K562 (cell line): ENCODE measurements at regions of chr3 and their contacts with region 1.

Region 1: DNA sequence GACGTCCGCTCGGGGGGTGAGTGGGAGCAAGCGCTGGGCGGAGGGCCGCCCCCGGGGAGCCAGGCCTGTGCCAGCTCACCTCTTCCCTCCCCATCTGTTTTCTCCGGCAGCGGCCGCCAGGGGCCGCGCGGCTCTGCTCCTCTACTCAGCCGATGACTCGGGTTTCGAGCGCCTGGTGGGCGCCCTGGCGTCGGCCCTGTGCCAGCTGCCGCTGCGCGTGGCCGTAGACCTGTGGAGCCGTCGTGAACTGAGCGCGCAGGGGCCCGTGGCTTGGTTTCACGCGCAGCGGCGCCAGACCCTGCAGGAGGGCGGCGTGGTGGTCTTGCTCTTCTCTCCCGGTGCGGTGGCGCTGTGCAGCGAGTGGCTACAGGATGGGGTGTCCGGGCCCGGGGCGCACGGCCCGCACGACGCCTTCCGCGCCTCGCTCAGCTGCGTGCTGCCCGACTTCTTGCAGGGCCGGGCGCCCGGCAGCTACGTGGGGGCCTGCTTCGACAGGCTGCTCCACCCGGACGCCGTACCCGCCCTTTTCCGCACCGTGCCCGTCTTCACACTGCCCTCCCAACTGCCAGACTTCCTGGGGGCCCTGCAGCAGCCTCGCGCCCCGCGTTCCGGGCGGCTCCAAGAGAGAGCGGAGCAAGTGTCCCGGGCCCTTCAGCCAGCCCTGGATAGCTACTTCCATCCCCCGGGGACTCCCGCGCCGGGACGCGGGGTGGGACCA is 632 bp upstream of the CRELD1 start:
- DNase-seq: peak; percentile 84 to 91 (median 88)
- ATAC-seq: peak; percentile 87
- H3K4me3 ChIP-seq: peak overlapping the region; percentile 57
- H3K27ac ChIP-seq: peak overlapping the region; percentile 88
- H3K4me1 ChIP-seq: peaks cover 11 to 43% of the 10 kb centered on the region in 2 experiments; a peak in 4 of 5 replicates
- H3K27me3 ChIP-seq: no peaks in the 10 kb centered on the region
- CTCF ChIP-seq: peak; percentile 86 to 96 (median 90)
- EP300 ChIP-seq: no peak
- POLR2A ChIP-seq: no peak; the same call in 1 of the 2 replicates
- RAD21 ChIP-seq: peak; percentile 85 to 86

Region 2: GRCh38 chr3:9715764-9716437 is 217.1 kb before region 1 on chr3:
- CTCF ChIA-PET with region 1: no interaction called
- POLR2A ChIA-PET with region 1: no interaction called
- in situ Hi-C with region 1: no loop called
- intact Hi-C with region 1: loop called (anchors 5 kb)
- DNase-seq: peak; percentile 82 to 94 (median 87)
- ATAC-seq: peak; percentile 99
- H3K4me3 ChIP-seq: no peak overlapping the region
- H3K27ac ChIP-seq: peak overlapping the region; percentile 62; the same call in 2 of the 3 replicates
- H3K4me1 ChIP-seq: peaks cover 5 to 10% of the 10 kb centered on the region in 2 experiments; a peak in 4 of 5 replicates
- H3K27me3 ChIP-seq: peaks cover 33 to 38% of the 10 kb centered on the region in 2 experiments
- CTCF ChIP-seq: peak; percentile 93 to 99 (median 99)
- EP300 ChIP-seq: peak; percentile 79
- POLR2A ChIP-seq: no peak
- RAD21 ChIP-seq: peak; percentile 99

Region 3: GRCh38 chr3:9862391-9863057 is 70.5 kb before region 1 on chr3:
- CTCF ChIA-PET with region 1: no interaction called
- POLR2A ChIA-PET with region 1: no interaction called
- in situ Hi-C with region 1: no loop called
- intact Hi-C with region 1: loop called (anchors 5 kb)
- DNase-seq: peak; percentile 96 to 100 (median 99)
- ATAC-seq: peak; percentile 99
- H3K4me3 ChIP-seq: peak overlapping the region; percentile 36
- H3K27ac ChIP-seq: peak overlapping the region; percentile 56
- H3K4me1 ChIP-seq: peaks cover 6 to 30% of the 10 kb centered on the region in 2 experiments; a peak in 4 of 5 replicates
- H3K27me3 ChIP-seq: no peaks in the 10 kb centered on the region
- CTCF ChIP-seq: peak; percentile 68 to 98 (median 95)
- EP300 ChIP-seq: no peak
- POLR2A ChIP-seq: peak; percentile 77
- RAD21 ChIP-seq: peak; percentile 86 to 89

Region 4: GRCh38 chr3:9944271-9944670 is 11.3 kb after region 1 on chr3:
- CTCF ChIA-PET with region 1: no interaction called
- POLR2A ChIA-PET with region 1: interaction called, 11 read pairs
- in situ Hi-C with region 1: no loop called
- intact Hi-C with region 1: no loop called
- DNase-seq: no peak
- ATAC-seq: no peak
- H3K4me3 ChIP-seq: no peak overlapping the region
- H3K27ac ChIP-seq: no peak overlapping the region
- H3K4me1 ChIP-seq: peaks cover 0 to 27% of the 10 kb centered on the region in 2 experiments; a peak in 1 of 5 replicates
- H3K27me3 ChIP-seq: no peaks in the 10 kb centered on the region
- CTCF ChIP-seq: no peak
- EP300 ChIP-seq: no peak
- POLR2A ChIP-seq: no peak
- RAD21 ChIP-seq: no peak

Region 5: GRCh38 chr3:9986237-9986725 is 53.3 kb after region 1 on chr3:
- CTCF ChIA-PET with region 1: interaction called, 4 read pairs
- POLR2A ChIA-PET with region 1: interaction called, 15 read pairs
- in situ Hi-C with region 1: no loop called
- intact Hi-C with region 1: no loop called
- DNase-seq: no peak
- ATAC-seq: peak; percentile 52
- H3K4me3 ChIP-seq: peak overlapping the region; percentile 96
- H3K27ac ChIP-seq: peak overlapping the region; percentile 75
- H3K4me1 ChIP-seq: peaks cover 10 to 12% of the 10 kb centered on the region in 2 experiments; a peak in 4 of 5 replicates
- H3K27me3 ChIP-seq: no peaks in the 10 kb centered on the region
- CTCF ChIP-seq: 0 out of 6 replicates have a peak, but pooled peaks of 1 of the 3 experiments have one; percentile 0
- EP300 ChIP-seq: no peak
- POLR2A ChIP-seq: no peak
- RAD21 ChIP-seq: no peak

Region 6: DNA sequence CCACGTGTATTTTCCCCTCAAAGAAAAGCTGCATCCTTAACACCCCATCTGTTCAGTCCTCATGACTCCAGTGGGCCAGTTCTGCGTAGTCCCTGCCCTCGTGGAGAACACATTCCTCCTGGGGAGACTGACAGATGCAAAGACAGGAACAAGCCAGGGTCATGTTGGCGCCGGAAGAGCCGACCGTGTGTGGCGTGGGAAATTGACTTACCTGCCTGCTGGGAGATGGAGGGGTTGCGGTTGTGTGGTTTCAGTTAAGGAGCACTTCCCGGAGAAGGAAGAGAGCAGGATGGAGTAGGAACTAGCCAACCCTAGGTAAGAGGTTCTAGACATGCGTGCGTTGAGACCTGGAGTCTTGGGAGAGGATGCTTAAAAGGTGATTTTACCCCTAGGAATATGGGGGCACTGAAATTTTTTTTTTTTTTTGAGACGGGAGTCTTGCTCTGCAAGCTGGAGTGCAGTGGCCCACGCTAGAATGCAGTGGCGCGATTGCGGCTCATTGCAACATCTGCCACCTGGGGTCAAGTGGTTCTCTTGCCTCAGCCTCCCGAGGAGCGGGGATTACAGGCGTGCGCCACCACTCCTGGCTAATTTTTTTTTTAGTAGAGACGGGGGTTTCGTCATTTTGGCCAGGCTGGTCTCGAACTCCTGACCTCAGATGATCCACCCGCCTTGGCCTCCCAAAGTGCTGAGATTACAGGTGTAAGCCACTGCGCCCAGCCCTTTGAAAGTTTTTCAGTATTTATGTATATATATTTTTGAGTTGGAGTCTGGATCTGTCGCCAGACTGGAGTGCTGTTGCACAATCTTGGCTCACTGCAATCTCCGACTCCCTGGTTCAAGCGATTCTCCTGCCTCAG is 209.9 kb after region 1 on chr3:
- CTCF ChIA-PET with region 1: no interaction called
- POLR2A ChIA-PET with region 1: no interaction called
- in situ Hi-C with region 1: no loop called
- intact Hi-C with region 1: loop called (anchors 5 kb)
- DNase-seq: peak; percentile 34 to 68 (median 42)
- ATAC-seq: peak; percentile 66
- H3K4me3 ChIP-seq: peak overlapping the region; percentile 61
- H3K27ac ChIP-seq: peak overlapping the region; percentile 84
- H3K4me1 ChIP-seq: peaks cover 15 to 27% of the 10 kb centered on the region in 2 experiments; a peak in 4 of 5 replicates
- H3K27me3 ChIP-seq: no peaks in the 10 kb centered on the region
- CTCF ChIP-seq: no peak
- EP300 ChIP-seq: peak; percentile 64
- POLR2A ChIP-seq: no peak; the same call in 1 of the 2 replicates
- RAD21 ChIP-seq: no peak; a peak in 1 of 4 replicates